ENCODE measurements at regions of chrX and their contacts with region 1.

Region 1: DNA sequence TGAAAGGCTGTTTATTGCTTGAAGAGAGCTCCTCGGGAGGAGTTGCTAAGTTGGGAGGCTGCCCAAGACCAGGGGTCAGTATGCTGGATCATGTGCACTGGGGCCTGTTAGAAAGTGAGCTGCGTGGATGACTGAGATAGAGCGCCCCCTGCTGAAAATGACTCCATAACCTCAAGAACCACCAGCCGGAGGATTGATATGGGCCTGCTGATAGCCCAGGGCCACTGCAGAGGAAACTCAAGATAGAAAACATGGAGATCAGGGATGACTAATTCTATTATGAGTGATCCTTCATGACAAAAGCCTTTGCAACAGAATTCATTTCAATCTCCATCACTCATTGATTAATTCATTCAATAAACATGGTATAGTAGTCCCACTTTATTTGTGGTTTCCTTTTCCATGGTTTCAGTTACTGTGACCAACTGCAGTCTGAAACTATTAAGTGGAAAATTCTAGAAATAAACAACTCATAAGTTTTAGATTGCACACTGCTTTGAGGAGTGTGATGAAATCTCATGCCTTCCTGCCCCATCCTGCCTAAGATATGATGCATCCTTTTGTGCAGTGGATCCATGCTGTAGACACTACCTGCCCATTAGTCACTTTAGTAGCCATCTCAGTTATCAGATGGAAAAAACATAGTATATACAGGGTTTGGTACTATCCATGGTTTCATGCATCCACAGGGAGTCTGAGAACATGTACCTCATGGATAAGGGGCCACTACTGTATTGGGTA is 126.7 kb upstream of the MBNL3 start:
- DNase-seq: peak in 38 of 42 donors; percentile 4 to 77 (median 34)

Region 2: GRCh38 chrX:132292793-132293192 is 322.8 kb before region 1 on chrX:
- intact Hi-C with region 1: loop called (anchors 10 kb)
- DNase-seq: peak in 24 of 42 donors; percentile 12 to 69 (median 38)